ENCODE measurements at regions of chr2 and their contacts with region 1.

Region 1: GRCh38 chr2:137910641-137911040 is 53.6 kb upstream of the HNMT start:
- DNase-seq: no peak

Region 2: GRCh38 chr2:138090330-138090729 is 179.7 kb after region 1 on chr2:
- intact Hi-C with region 1: loop called (anchors 2 kb)
- DNase-seq: no peak

Region 3: GRCh38 chr2:138373993-138374408 is 463.4 kb after region 1 on chr2:
- intact Hi-C with region 1: loop called (anchors 2 kb)
- DNase-seq: no peak

Region 4: GRCh38 chr2:138787053-138787666 is 876.5 kb after region 1 on chr2:
- intact Hi-C with region 1: loop called (anchors 1 kb)
- DNase-seq: no peak

Region 5: GRCh38 chr2:138827426-138828054 is 916.9 kb after region 1 on chr2:
- intact Hi-C with region 1: loop called (anchors 1 kb)
- DNase-seq: peak in 1 of 10 donors; percentile 12

Measured in posterior cingulate gyrus (tissue), 11 donors.